Esophagus muscularis mucosa (tissue), 4 donors: ENCODE measurements at regions of chrX and their contacts with region 1.

Region 1: GRCh38 chrX:46686003-46686645 is 72.8 kb downstream of the SLC9A7 start:
- DNase-seq: no peak
- H3K4me3 ChIP-seq: no peak overlapping the region
- H3K27ac ChIP-seq: no peak overlapping the region
- H3K4me1 ChIP-seq: no peaks in the 10 kb centered on the region
- H3K27me3 ChIP-seq: no peaks in the 10 kb centered on the region
- CTCF ChIP-seq: peak; percentile 48 to 66 (median 55)
- EP300 ChIP-seq: no peak
- POLR2A ChIP-seq: no peak

Region 2: GRCh38 chrX:46554942-46555341 is 131.2 kb before region 1 on chrX:
- intact Hi-C with region 1: loop called (anchors 5 kb)
- DNase-seq: no peak
- H3K4me3 ChIP-seq: no peak overlapping the region
- H3K27ac ChIP-seq: no peak overlapping the region
- H3K4me1 ChIP-seq: peaks cover 0 to 3% (median 0%) of the 10 kb centered on the region in 4 donors
- H3K27me3 ChIP-seq: no peaks in the 10 kb centered on the region
- CTCF ChIP-seq: peak; percentile 9 to 23 (median 19)
- EP300 ChIP-seq: no peak
- POLR2A ChIP-seq: no peak

Region 3: GRCh38 chrX:46573331-46573891 is 112.7 kb before region 1 on chrX and contains the start of gene CHST7:
- intact Hi-C with region 1: loop called (anchors 5 kb)
- DNase-seq: no peak
- H3K4me3 ChIP-seq: peak within 1 kb of the TSS; percentile 58 to 71 (median 60)
- H3K27ac ChIP-seq: peak within 1 kb of the TSS; percentile 43 to 75 (median 67)
- H3K4me1 ChIP-seq: peaks cover 7 to 27% (median 17%) of the 10 kb centered on the region in 4 donors
- H3K27me3 ChIP-seq: peaks cover 0 to 9% (median 0%) of the 10 kb centered on the region in 4 donors
- CTCF ChIP-seq: no peak
- EP300 ChIP-seq: no peak
- POLR2A ChIP-seq: no peak
- total RNA-seq, gene CHST7: 12.5 to 20.6 (median 17.2) TPM